Ovary (tissue), 10 donors: ENCODE measurements at regions of chr15 and their contacts with region 1.

Region 1: GRCh38 chr15:42920519-42921227 is at the start of gene TTBK2:
- DNase-seq: peak; percentile 98 to 99 (median 99)
- H3K4me3 ChIP-seq: peak within 1 kb of the TSS; percentile 95
- H3K27ac ChIP-seq: peak within 1 kb of the TSS; percentile 83 to 90
- H3K4me1 ChIP-seq: no peaks in the 10 kb centered on the region
- H3K27me3 ChIP-seq: no peaks in the 10 kb centered on the region
- CTCF ChIP-seq: peak in 1 of 3 donors; percentile 37
- EP300 ChIP-seq: no peak
- POLR2A ChIP-seq: peak; percentile 84
- total RNA-seq, gene TTBK2: 18.1 to 28.7 (median 23.2) TPM

Region 2: DNA sequence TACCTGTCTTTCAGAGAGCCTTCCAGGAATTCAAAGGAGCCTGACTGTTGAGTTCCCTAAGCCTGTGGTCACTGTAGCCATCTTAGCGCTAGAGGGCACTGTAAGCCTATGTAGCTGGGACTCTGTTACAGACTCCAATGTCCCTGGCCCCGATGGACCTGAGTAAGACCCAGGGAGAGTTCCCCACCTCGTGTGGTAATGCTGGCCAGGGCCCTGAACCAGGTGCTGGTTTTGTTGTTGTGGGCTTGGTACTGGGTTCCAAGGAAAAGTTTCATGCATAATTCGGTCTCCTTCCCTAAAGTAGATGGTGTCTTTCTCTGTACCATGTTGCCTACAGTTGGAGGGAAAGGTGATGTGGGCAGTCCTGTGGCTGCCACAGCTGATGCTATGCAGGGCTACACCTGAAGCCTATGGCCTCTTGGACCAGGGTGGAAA is 216.2 kb before region 1 on chr15:
- intact Hi-C with region 1: loop called in 1 of 4 experiments (anchors 10 kb)
- DNase-seq: peak in 4 of 5 donors; percentile 36 to 66 (median 56)
- H3K4me3 ChIP-seq: no peak overlapping the region
- H3K27ac ChIP-seq: no peak overlapping the region
- H3K4me1 ChIP-seq: no peaks in the 10 kb centered on the region
- H3K27me3 ChIP-seq: no peaks in the 10 kb centered on the region
- CTCF ChIP-seq: peak; percentile 16 to 48 (median 28)
- EP300 ChIP-seq: no peak
- POLR2A ChIP-seq: no peak

Region 3: GRCh38 chr15:42736793-42737528 is 183.7 kb before region 1 on chr15 and contains the start of gene CDAN1:
- intact Hi-C with region 1: loop called in 2 of 4 experiments (anchors 10 kb)
- DNase-seq: peak; percentile 94 to 97 (median 95)
- H3K4me3 ChIP-seq: peak within 1 kb of the TSS; percentile 75
- H3K27ac ChIP-seq: peak within 1 kb of the TSS; percentile 78 to 93
- H3K4me1 ChIP-seq: peaks cover 2% of the 10 kb centered on the region
- H3K27me3 ChIP-seq: no peaks in the 10 kb centered on the region
- CTCF ChIP-seq: peak in 1 of 3 donors; percentile 14
- EP300 ChIP-seq: no peak
- POLR2A ChIP-seq: peak; percentile 83
- total RNA-seq, gene CDAN1: 16.9 to 50.6 (median 27.1) TPM